BJ (cell line): ENCODE measurements at regions of chr14 and their contacts with region 1.

Region 1: GRCh38 chr14:93115069-93115820 is 480 bp downstream of the ITPK1 start:
- DNase-seq: peak; percentile 30
- H3K4me3 ChIP-seq: peak overlapping the region; percentile 63
- H3K27me3 ChIP-seq: no peaks in the 10 kb centered on the region
- CTCF ChIP-seq: no peak

Region 2: GRCh38 chr14:93078870-93079269 is 36.4 kb before region 1 on chr14:
- CTCF ChIA-PET with region 1: interaction called, 11 read pairs
- POLR2A ChIA-PET with region 1: no interaction called
- DNase-seq: peak; percentile 92
- H3K4me3 ChIP-seq: no peak overlapping the region
- H3K27me3 ChIP-seq: no peaks in the 10 kb centered on the region
- CTCF ChIP-seq: no peak

Region 3: DNA sequence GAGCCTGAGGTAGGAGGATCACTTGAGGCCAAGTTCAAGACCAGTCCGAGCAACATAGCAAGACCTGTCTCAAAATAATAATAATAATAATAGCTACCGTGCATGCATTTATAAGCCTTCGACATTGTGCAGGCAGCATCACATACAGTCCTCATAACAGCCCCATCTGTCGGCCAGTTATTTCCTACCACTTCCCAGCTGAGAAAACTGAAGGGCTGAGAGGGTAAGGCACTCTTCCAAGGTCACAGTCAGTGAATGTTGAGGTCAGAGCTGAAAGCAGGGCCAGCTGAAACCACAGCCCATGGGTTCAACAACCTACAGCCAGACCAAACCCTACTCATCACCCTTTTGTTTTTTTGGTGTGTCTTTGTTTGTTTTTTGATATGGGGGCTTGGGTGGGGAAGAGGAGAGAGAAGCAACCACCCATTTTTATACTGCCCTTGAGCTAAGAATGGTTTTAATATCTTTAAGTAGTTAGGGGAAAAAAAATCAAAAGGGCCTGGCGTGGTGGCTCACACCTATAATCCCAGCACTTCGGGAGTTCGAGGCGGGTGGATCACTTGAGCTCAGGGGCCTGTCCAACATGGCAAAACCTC is 17.3 kb after region 1 on chr14:
- CTCF ChIA-PET with region 1: interaction called, 78 read pairs
- POLR2A ChIA-PET with region 1: no interaction called
- DNase-seq: no peak
- H3K4me3 ChIP-seq: no peak overlapping the region
- H3K27me3 ChIP-seq: peaks cover 7% of the 10 kb centered on the region
- CTCF ChIP-seq: peak; percentile 49

Region 4: GRCh38 chr14:93146119-93146518 is 30.9 kb after region 1 on chr14:
- CTCF ChIA-PET with region 1: interaction called, 12 read pairs
- POLR2A ChIA-PET with region 1: no interaction called
- DNase-seq: no peak
- H3K4me3 ChIP-seq: no peak overlapping the region
- H3K27me3 ChIP-seq: no peaks in the 10 kb centered on the region; the same call in 1 of the 2 replicates
- CTCF ChIP-seq: no peak

Region 5: GRCh38 chr14:93206793-93207467 is 91.7 kb after region 1 on chr14 and contains the starts of genes GON7 and UBR7:
- CTCF ChIA-PET with region 1: interaction called, 10 read pairs
- POLR2A ChIA-PET with region 1: no interaction called
- DNase-seq: peak; percentile 86
- H3K4me3 ChIP-seq: peak within 1 kb of the TSS; percentile 96
- H3K27me3 ChIP-seq: no peaks in the 10 kb centered on the region
- CTCF ChIP-seq: peak; percentile 40
- polyA plus RNA-seq, gene GON7: 4.5 and 7.7 TPM in 2 replicates
- polyA plus RNA-seq, gene UBR7: 25.4 and 30.3 TPM in 2 replicates